ENCODE measurements at regions of chr7 and their contacts with region 1.

Region 1: DNA sequence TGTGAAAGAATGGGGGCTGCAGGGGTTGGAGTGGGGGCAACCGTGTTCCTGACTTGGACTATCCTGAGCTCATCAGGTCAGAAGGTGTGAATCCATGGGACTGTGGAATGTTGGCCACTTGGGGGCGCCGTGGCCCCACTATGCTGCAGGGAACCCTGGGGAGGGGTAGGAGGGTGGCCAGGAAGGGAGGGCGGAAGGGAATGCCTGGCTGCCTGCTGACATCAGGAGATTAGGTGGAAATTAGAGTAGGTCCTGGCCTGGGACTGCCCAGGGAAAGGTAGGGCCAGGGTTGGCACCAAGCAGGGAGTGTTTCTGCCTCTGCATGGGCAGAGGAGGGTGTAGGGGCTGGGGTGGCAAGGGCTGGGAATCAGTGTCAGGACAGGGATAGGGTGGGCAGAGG is 65.8 kb upstream of the PRSS58 start:
- DNase-seq: peak; percentile 69

Region 2: DNA sequence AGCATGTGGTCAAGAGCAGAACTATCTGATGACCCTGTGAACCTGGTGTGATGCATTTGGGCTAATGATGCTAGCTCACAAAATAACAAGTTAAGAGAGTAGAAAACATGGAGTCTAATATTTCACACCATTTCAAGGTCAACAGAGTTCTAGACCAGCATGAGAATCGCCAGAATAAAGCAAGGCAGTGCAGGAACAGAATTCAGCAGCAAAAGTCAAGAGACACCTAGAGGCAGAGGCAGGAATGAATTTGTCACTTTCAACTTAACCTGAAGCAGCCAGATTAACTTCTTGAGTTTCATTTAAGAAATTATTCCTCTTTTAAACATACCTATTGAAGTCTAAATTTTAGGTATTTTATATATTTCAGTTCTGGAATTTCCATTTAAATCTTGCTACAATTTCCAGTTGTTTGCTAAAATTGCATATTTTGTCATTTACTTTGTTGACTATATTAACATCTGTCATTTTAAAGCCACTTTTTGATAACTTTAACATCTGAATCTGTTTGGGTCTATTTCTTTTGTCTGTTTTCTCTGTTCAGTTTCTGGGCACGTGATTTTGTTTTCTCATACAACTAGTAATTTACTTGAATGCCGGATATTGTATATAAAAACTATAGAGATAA is 21.7 kb before region 1 on chr7:
- CTCF ChIA-PET with region 1: interaction called, 20 read pairs
- POLR2A ChIA-PET with region 1: no interaction called
- DNase-seq: peak; percentile 55

Region 3: GRCh38 chr7:142313528-142313927 is 10.2 kb before region 1 on chr7:
- CTCF ChIA-PET with region 1: interaction called, 10 read pairs
- POLR2A ChIA-PET with region 1: no interaction called
- DNase-seq: no peak

Region 4: DNA sequence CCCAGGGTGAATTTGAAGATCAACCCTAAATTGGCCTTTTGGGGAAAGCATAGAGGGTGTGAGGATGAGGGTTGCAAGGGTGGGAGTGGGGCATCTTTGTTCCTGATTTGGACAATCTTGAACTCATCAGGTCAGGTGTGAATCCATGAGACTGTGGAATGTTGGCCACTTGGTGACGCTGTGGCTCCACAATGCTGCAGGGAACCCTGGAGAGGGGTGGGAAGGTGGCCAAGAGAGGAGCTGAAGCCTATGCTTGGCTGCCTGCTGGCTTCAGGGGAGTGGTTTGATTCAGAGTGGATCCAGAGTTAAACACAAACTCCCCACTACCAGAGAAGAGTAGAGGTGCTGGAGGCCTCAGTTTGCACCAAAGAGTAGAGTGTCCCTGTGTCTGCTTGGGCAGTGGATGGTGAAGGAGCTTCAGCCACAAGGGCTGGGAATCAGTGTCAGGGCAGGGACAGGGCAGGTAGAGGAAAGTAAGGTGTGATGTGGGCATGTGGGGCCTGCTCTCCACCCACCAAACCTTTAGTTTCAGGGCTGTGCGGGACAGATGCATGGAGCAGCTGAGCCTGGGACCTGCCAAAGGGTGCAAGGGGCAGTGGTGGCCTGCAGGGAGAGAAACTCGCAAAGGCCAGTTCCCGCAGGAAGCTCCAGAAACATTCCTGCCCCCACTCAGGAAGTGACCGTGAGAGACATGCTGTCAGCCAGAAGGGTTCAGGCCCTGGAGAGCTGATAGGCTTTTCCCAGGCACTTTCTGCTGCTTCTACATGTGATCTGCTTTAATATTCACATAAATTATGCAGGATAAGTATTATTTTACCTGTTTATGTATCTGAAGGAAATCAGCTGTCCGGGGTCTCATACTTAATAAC is 15.2 kb after region 1 on chr7:
- CTCF ChIA-PET with region 1: interaction called, 12 read pairs
- POLR2A ChIA-PET with region 1: no interaction called
- DNase-seq: peak; percentile 56